GM12878 (cell line): ENCODE measurements at regions of chr6 and their contacts with region 1.

Region 1: GRCh38 chr6:110298916-110299315 is 59.2 kb downstream of the METTL24 start:
- DNase-seq: no peak
- ATAC-seq: no peak
- H3K4me3 ChIP-seq: no peak overlapping the region
- H3K27ac ChIP-seq: no peak overlapping the region
- H3K4me1 ChIP-seq: no peaks in the 10 kb centered on the region
- H3K27me3 ChIP-seq: no peaks in the 10 kb centered on the region; a peak in 1 of 4 replicates
- CTCF ChIP-seq: no peak
- EP300 ChIP-seq: no peak
- POLR2A ChIP-seq: no peak
- RAD21 ChIP-seq: no peak

Region 2: GRCh38 chr6:109434456-109434855 is 864.5 kb before region 1 on chr6:
- CTCF ChIA-PET with region 1: no interaction called
- POLR2A ChIA-PET with region 1: no interaction called
- RAD21 ChIA-PET with region 1: no interaction called
- SMC1A ChIA-PET with region 1: no interaction called
- in situ Hi-C with region 1: no loop called
- intact Hi-C with region 1: no loop called
- DNase-seq: no peak
- ATAC-seq: no peak
- H3K4me3 ChIP-seq: no peak overlapping the region
- H3K27ac ChIP-seq: no peak overlapping the region
- H3K4me1 ChIP-seq: peaks cover under 1% of the 10 kb centered on the region; the same call in 1 of the 2 replicates
- H3K27me3 ChIP-seq: no peaks in the 10 kb centered on the region; a peak in 1 of 4 replicates
- CTCF ChIP-seq: no peak
- EP300 ChIP-seq: no peak
- POLR2A ChIP-seq: no peak
- RAD21 ChIP-seq: no peak

Region 3: DNA sequence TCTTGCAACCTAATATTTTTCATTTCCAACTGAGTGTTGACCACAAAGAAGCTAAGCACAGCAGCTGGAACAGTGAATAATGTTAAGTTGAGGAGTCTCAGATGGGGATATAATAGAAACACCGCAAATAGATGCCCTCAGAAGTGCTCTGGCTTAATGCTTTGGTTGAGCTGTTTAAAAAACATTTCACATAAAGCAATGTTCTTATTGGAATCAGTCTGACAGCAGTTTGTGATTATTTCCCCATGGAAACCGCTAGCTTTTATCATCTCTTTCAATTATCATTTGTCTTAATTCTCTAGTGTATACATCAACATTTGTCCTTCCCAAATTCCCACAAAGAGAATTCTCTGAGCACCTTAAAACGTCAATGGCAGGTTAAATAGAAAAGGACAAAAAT is 28.5 kb after region 1 on chr6:
- CTCF ChIA-PET with region 1: no interaction called
- POLR2A ChIA-PET with region 1: no interaction called
- RAD21 ChIA-PET with region 1: no interaction called
- SMC1A ChIA-PET with region 1: interaction called, 6 read pairs
- in situ Hi-C with region 1: no loop called
- intact Hi-C with region 1: loop called (anchors 1 kb)
- DNase-seq: no peak
- ATAC-seq: no peak
- H3K4me3 ChIP-seq: no peak overlapping the region
- H3K27ac ChIP-seq: no peak overlapping the region
- H3K4me1 ChIP-seq: no peaks in the 10 kb centered on the region
- H3K27me3 ChIP-seq: no peaks in the 10 kb centered on the region; a peak in 1 of 4 replicates
- CTCF ChIP-seq: no peak
- EP300 ChIP-seq: no peak
- POLR2A ChIP-seq: no peak
- RAD21 ChIP-seq: no peak